ENCODE measurements at regions of chr5 and their contacts with region 1.

Region 1: DNA sequence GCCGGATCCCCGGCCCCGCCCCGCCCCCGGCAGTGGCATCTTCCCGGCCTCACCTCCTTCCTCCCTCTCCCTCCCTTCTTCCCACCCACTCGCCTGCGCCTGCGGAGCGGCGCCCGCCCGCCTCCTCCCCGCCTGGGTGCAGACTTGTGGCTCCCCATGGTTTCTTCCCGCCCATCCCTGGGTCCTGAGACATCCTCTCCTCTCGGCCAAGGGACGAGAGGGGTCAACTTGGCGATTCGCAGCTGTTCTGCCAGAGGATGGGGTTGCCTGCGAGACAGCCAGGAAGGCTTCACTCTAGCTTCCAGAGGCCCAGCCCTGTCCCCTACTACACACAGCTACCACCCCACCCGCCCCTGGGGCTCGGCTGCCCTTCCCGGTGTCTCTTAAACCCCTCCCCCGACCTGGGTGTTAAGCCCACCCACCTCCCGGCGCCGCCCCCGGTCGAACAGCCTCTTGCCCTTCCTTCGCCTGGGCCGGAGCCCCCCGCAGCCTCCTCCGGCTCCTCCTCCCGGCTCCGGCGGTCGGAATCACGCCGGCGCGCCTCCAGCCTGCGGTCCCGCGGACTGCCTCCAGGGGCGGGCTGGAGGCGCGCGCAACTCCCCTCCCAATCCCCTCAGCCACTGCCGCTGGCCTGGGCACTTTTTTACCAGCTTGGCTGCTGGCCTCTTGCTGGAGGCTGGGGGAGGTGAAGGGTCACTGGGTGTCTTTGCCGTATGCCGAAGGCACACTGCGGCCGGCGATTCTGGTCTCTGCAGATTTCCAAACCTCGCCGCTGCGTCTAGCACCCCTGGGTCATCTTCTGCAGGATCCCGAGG is 1.9 kb downstream of the JADE2 start:
- DNase-seq: peak; percentile 72 to 84
- ATAC-seq: peak; percentile 40 to 49 (median 40)
- H3K4me3 ChIP-seq: peak overlapping the region; percentile 75
- H3K4me3 Mint-ChIP-seq: peak overlapping the region; percentile 96
- H3K27ac ChIP-seq: peak overlapping the region; percentile 56
- H3K27ac Mint-ChIP-seq: peak overlapping the region; percentile 92 to 96
- H3K4me1 ChIP-seq: peaks cover 60% of the 10 kb centered on the region
- H3K4me1 Mint-ChIP-seq: peaks cover 40 to 70% of the 10 kb centered on the region in 2 donors
- H3K27me3 ChIP-seq: no peaks in the 10 kb centered on the region
- H3K27me3 Mint-ChIP-seq: no peaks in the 10 kb centered on the region
- CTCF ChIP-seq: peak; percentile 70

Region 2: DNA sequence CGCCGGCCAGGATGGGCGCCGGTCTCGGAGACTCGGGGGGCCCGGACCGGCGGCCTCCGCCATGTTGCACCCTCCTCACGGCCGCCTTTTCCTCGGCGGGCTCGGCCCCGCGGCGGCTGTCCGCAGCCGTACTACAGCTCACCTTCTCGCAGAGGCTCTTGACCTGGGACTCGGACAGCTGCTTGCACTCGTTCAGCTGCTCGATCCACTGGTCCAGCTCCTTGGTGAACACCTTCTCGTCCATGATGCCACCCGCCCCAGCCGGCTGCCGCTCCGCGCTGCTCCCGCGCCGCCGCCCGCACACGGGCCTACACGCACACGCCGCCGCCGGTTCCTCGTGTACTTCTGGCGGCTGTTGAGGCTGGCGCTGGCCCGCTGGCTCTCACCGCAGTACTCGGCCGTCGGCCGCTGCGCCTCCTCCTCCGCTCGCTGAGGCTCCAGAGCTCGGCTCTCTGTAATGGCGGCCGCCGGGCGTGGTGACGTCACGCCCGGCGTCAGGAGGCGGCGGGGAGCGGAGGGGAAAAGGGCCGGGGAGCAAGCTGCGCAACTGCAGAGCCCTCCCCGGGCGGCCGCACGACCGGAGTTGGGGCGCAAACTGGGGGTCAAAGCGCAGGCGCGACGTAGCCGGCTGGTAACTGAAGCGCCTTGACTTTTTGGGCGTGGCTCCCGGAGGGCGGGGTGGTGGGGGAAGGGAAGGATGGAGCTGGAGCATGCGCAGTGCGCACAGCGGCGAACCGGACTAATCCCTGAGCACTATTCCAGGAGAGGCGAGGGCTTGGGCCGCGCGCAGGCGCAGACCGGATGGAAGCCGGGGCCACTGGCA is 301.5 kb before region 1 on chr5 and contains the start of gene PPP2CA:
- intact Hi-C with region 1: loop called (anchors 10 kb)
- DNase-seq: peak; percentile 98 to 100
- ATAC-seq: peak; percentile 80 to 92 (median 81)
- H3K4me3 ChIP-seq: peak within 1 kb of the TSS; percentile 79
- H3K4me3 Mint-ChIP-seq: peak within 1 kb of the TSS; percentile 97
- H3K27ac ChIP-seq: peak within 1 kb of the TSS; percentile 96
- H3K27ac Mint-ChIP-seq: peak within 1 kb of the TSS; percentile 96 to 100
- H3K4me1 ChIP-seq: peaks cover 20% of the 10 kb centered on the region
- H3K4me1 Mint-ChIP-seq: peaks cover 55 to 61% of the 10 kb centered on the region in 2 donors
- H3K27me3 ChIP-seq: no peaks in the 10 kb centered on the region
- H3K27me3 Mint-ChIP-seq: no peaks in the 10 kb centered on the region
- CTCF ChIP-seq: peak; percentile 23
- total RNA-seq, gene PPP2CA: 188 to 205 (median 191) TPM

Region 3: DNA sequence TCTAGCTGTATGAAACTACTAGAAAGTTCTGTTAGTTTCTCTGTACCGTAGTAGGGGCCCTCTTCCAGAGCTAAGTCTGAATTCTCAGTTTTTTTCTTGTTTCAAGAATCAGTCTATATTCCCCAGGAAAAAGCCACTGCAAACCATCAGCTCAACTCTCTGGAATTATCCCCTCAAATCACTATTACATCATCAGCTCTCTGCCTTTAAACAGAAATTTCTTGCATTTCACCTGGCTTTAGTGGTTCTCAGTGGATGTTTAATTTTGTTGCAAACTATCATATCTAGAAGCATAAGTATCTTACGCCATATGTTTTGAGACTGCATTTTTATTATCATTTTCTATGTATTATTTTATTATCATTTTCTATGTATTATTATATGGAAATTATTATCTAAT is 246.3 kb before region 1 on chr5:
- intact Hi-C with region 1: no loop called
- DNase-seq: no peak
- ATAC-seq: no peak
- H3K4me3 ChIP-seq: no peak overlapping the region
- H3K4me3 Mint-ChIP-seq: no peak overlapping the region
- H3K27ac ChIP-seq: no peak overlapping the region
- H3K27ac Mint-ChIP-seq: no peak overlapping the region
- H3K4me1 ChIP-seq: no peaks in the 10 kb centered on the region
- H3K4me1 Mint-ChIP-seq: no peaks in the 10 kb centered on the region
- H3K27me3 ChIP-seq: peaks cover 2% of the 10 kb centered on the region
- H3K27me3 Mint-ChIP-seq: peaks cover 0 to 24% of the 10 kb centered on the region in 2 donors
- CTCF ChIP-seq: no peak

Region 4: GRCh38 chr5:134411546-134412266 is 115.6 kb before region 1 on chr5 and contains the start of gene CDKN2AIPNL:
- intact Hi-C with region 1: loop called (anchors 1 kb)
- DNase-seq: peak; percentile 88 to 94
- ATAC-seq: peak; percentile 99 to 100 (median 99)
- H3K4me3 ChIP-seq: peak within 1 kb of the TSS; percentile 93
- H3K4me3 Mint-ChIP-seq: peak within 1 kb of the TSS; percentile 95
- H3K27ac ChIP-seq: peak within 1 kb of the TSS; percentile 80
- H3K27ac Mint-ChIP-seq: peak within 1 kb of the TSS; percentile 85 to 92
- H3K4me1 ChIP-seq: peaks cover 23% of the 10 kb centered on the region
- H3K4me1 Mint-ChIP-seq: peaks cover 20 to 26% of the 10 kb centered on the region in 2 donors
- H3K27me3 ChIP-seq: no peaks in the 10 kb centered on the region
- H3K27me3 Mint-ChIP-seq: no peaks in the 10 kb centered on the region
- CTCF ChIP-seq: peak; percentile 75
- total RNA-seq, gene CDKN2AIPNL: 12.3 to 15.5 (median 13.4) TPM

Region 5: DNA sequence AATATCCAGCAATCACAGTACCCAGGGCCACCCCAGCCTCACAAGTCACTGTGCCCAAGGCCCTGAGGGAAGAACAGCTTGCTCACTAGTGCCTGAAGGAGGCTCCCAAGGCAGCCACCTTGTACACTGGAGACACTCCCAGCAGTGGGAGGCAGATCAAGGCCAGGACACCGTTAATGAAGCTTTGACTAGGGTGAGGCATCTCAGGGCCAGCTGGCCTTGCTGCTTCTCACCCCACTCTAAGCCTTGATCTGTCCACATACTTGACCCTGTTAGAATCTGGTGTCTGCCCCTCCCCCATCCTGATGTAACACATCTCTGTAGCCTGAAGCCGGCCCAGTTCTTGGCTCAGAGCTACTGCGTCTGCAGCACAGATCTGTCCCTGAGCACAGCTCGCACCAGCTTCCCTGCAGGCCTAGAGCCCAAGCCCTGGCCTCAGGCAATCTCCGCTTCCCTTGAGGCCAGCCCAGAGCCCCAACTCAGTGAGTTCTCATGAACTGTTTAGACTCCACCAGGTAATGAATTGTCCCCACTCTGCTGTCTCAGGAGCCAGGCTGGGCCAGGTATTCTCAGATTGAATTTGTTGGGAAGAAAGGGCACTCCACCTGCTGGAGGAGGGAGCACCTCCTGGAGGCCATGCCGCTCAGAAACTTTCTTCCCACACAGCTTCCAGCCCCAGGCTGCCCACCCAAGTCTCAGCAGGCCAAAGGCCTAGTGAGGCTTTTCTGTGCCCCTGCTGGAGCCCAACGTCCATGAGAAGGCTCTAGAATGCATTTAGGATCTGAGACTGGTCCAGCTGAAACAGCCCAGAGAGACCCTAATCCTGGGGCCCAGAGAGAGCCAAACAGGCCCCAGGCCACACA is 15.3 kb before region 1 on chr5:
- intact Hi-C with region 1: no loop called
- DNase-seq: no peak
- ATAC-seq: no peak
- H3K4me3 ChIP-seq: no peak overlapping the region
- H3K4me3 Mint-ChIP-seq: no peak overlapping the region
- H3K27ac ChIP-seq: no peak overlapping the region
- H3K27ac Mint-ChIP-seq: no peak overlapping the region
- H3K4me1 ChIP-seq: no peaks in the 10 kb centered on the region
- H3K4me1 Mint-ChIP-seq: peaks cover 0 to 4% of the 10 kb centered on the region in 2 donors
- H3K27me3 ChIP-seq: no peaks in the 10 kb centered on the region
- H3K27me3 Mint-ChIP-seq: no peaks in the 10 kb centered on the region
- CTCF ChIP-seq: no peak

Region 6: GRCh38 chr5:134555890-134556311 is 28.5 kb after region 1 on chr5:
- intact Hi-C with region 1: loop called (anchors 1 kb)
- DNase-seq: peak; percentile 71 to 91
- ATAC-seq: peak; percentile 91 to 94 (median 92)
- H3K4me3 ChIP-seq: no peak overlapping the region
- H3K4me3 Mint-ChIP-seq: peak overlapping the region; percentile 40
- H3K27ac ChIP-seq: peak overlapping the region; percentile 69
- H3K27ac Mint-ChIP-seq: peak overlapping the region; percentile 92 to 94
- H3K4me1 ChIP-seq: peaks cover 47% of the 10 kb centered on the region
- H3K4me1 Mint-ChIP-seq: peaks cover 41 to 52% of the 10 kb centered on the region in 2 donors
- H3K27me3 ChIP-seq: no peaks in the 10 kb centered on the region
- H3K27me3 Mint-ChIP-seq: no peaks in the 10 kb centered on the region
- CTCF ChIP-seq: no peak

Region 7: GRCh38 chr5:134577796-134578363 is 50.5 kb after region 1 on chr5:
- intact Hi-C with region 1: loop called (anchors 2 kb)
- DNase-seq: peak; percentile 74 to 87
- ATAC-seq: peak; percentile 69 to 90 (median 74)
- H3K4me3 ChIP-seq: no peak overlapping the region
- H3K4me3 Mint-ChIP-seq: no peak overlapping the region
- H3K27ac ChIP-seq: no peak overlapping the region
- H3K27ac Mint-ChIP-seq: peak overlapping the region; percentile 70 to 73
- H3K4me1 ChIP-seq: peaks cover 7% of the 10 kb centered on the region
- H3K4me1 Mint-ChIP-seq: peaks cover 30 to 32% of the 10 kb centered on the region in 2 donors
- H3K27me3 ChIP-seq: no peaks in the 10 kb centered on the region
- H3K27me3 Mint-ChIP-seq: no peaks in the 10 kb centered on the region
- CTCF ChIP-seq: peak; percentile 78